Dendritic cell treated with granulocyte-macrophage colony-stimulating factor and Interleukin-4, amounts not matched to agents 40 ng/mL and 50 ng/mL, for 4 days (primary cell): ENCODE measurements at regions of chr14 and their contacts with region 1.

Region 1: DNA sequence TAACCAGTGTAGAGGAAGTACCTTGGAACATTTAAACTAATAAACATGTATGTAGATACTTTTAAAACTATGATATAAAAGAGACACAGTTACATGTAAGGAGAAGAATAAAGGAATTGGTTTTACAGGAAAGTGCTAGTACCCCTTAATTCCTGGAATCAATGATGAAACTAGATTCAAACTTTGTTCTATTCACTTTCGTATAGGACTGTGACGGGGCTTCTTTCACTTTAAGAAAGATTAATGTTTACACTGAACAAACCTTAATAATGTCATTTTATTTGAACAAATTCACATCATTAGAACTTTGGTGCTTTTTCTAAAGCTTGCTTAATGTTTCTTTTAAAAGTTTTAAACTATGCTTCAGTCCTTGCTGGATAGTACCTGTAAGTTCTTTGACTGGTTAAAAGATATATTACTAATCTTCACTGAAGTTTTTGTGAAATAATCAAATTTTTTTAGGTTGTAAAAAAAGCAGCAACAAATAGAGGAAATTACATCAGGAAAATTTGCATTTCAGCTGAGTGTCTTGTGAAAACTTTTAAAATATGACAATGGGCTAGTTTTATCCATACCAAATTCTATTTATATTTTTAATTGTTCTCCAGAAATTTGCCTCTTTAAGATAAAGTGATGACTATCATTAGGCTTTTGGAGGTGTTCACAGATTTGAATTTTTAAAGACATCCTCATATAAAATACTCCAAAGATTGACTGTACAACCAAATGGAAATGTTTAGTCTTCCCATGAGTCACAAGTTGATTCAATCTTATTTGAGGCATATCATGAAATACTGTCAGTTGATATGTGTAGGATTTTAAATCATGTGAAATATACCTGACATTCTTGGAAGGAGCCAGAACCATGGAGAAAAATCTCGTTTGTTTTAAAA is 36.2 kb downstream of the PAPOLA start:
- H3K4me3 Mint-ChIP-seq: no peak overlapping the region
- H3K27ac Mint-ChIP-seq: no peak overlapping the region
- H3K4me1 Mint-ChIP-seq: no peaks in the 10 kb centered on the region
- H3K27me3 Mint-ChIP-seq: no peaks in the 10 kb centered on the region

Region 2: DNA sequence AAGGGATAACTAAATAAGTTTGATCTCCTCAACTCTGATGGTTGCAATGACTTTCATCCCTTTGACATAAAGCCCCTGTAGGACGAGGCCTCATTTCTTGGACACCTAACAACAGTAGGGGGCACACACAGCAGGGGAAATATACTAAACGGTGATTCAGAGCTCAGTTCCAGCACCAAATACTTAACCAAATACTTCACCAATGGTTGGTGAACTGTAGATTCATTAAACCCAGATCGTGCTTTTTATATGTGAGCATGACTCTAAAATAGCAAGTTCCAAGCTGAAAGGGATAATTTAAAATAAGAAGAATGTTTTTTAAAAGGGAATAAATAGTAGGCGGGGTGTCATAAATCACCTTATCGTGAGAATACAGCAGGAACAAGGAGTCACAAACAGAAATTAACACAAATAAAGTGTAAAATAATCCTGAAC is 228.4 kb before region 1 on chr14:
- intact Hi-C with region 1: loop called (anchors 10 kb)
- H3K4me3 Mint-ChIP-seq: no peak overlapping the region
- H3K27ac Mint-ChIP-seq: no peak overlapping the region
- H3K4me1 Mint-ChIP-seq: no peaks in the 10 kb centered on the region
- H3K27me3 Mint-ChIP-seq: no peaks in the 10 kb centered on the region

Region 3: DNA sequence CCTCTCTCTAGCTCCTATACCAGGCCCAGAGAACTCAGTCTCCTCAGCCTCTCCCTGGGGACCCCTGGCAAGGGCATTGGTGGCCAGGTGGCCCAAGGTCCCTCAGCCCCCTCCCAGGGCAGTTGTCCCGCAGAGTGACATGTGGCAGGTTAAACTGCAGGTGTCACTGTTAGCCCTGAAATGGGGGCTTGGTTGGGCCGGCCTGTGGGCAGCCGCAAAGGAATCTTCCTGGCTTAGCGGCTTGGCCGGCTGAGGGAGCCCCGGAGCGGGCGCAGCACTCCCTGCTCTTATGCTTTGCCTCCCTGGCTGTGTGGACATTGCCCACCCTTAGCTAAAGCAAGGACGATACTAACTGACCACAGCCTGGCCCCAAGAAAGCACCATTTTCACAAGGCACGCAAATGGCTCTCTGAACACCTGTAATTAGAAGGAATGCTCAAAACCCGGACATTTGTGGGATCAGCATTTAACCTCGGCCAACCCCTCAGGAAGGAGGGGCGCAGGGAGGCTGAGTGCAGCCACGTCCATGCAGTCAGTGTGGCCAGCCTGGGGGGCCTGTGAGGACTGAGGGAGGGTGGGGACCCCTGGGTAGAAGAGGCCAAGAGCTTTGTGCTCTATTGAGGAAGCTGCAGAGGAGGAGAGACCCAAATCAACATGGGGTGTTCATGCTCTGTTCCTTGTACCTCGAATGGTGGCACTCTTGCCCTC is 46.0 kb after region 1 on chr14:
- intact Hi-C with region 1: no loop called
- H3K4me3 Mint-ChIP-seq: no peak overlapping the region
- H3K27ac Mint-ChIP-seq: no peak overlapping the region
- H3K4me1 Mint-ChIP-seq: peaks cover 10% of the 10 kb centered on the region
- H3K27me3 Mint-ChIP-seq: peaks cover 41% of the 10 kb centered on the region

Region 4: DNA sequence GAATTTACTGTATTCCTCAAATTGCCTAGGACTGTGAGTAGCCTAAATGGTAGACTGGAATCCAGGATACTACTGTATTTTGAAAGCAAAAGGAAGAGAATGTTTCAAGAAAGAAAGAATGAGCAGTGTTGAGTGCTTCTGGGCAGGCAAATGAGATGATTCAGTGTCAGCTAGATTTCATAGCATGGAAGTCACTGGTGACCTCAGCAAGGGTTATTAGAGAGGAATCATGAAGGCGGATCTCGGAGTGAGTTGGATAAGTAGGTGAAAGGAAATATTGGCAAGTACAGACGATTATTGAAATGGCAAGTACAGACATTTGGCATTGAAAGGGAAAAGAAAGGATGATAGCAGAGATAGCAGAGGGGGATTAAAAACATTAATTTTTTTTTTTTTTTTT is 285.9 kb after region 1 on chr14:
- intact Hi-C with region 1: no loop called
- H3K4me3 Mint-ChIP-seq: no peak overlapping the region
- H3K27ac Mint-ChIP-seq: no peak overlapping the region
- H3K4me1 Mint-ChIP-seq: peaks cover 23% of the 10 kb centered on the region
- H3K27me3 Mint-ChIP-seq: no peaks in the 10 kb centered on the region